ENCODE measurements at regions of chr3 and their contacts with region 1.

Region 1: GRCh38 chr3:25744470-25744869 is 38.8 kb downstream of the NGLY1 start:
- DNase-seq: no peak
- H3K4me3 Mint-ChIP-seq: no peak overlapping the region
- H3K27ac Mint-ChIP-seq: no peak overlapping the region
- H3K4me1 Mint-ChIP-seq: no peaks in the 10 kb centered on the region
- H3K27me3 Mint-ChIP-seq: no peaks in the 10 kb centered on the region

Region 2: DNA sequence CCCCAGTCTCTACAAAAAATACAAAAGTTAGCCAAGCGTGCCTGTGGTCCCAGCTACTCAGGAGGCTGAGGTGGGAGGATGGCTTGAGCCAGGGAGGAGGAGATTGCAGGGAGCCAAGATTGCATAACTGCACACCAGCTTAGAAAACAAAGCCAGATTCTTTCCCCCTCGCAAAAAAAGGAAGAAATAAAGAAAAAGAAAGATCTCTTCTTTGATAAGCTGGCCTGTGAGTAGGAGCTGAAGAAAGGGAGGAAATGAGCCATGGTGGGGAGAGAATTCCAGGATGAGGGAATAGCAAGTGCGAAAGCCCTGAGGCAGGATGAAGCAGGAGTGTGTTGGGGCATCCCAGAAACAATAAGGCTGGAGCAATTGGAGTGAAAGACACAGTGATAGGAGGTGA is 55.3 kb before region 1 on chr3:
- CTCF ChIA-PET with region 1: no interaction called
- POLR2A ChIA-PET with region 1: interaction called, 10 read pairs
- DNase-seq: no peak
- H3K4me3 Mint-ChIP-seq: no peak overlapping the region
- H3K27ac Mint-ChIP-seq: no peak overlapping the region
- H3K4me1 Mint-ChIP-seq: no peaks in the 10 kb centered on the region
- H3K27me3 Mint-ChIP-seq: peaks cover 14% of the 10 kb centered on the region

Region 3: GRCh38 chr3:25782938-25783660 is 38.6 kb after region 1 on chr3 and contains the start of gene NGLY1:
- CTCF ChIA-PET with region 1: no interaction called
- POLR2A ChIA-PET with region 1: no interaction called
- DNase-seq: peak; percentile 86
- H3K4me3 Mint-ChIP-seq: peak within 1 kb of the TSS; percentile 90
- H3K27ac Mint-ChIP-seq: peak within 1 kb of the TSS; percentile 91
- H3K4me1 Mint-ChIP-seq: peaks cover 42% of the 10 kb centered on the region
- H3K27me3 Mint-ChIP-seq: no peaks in the 10 kb centered on the region
- total RNA-seq, gene NGLY1: 57.5 to 69.5 TPM